Psoas muscle (tissue), 8 donors: ENCODE measurements at regions of chr9 and their contacts with region 1.

Region 1: DNA sequence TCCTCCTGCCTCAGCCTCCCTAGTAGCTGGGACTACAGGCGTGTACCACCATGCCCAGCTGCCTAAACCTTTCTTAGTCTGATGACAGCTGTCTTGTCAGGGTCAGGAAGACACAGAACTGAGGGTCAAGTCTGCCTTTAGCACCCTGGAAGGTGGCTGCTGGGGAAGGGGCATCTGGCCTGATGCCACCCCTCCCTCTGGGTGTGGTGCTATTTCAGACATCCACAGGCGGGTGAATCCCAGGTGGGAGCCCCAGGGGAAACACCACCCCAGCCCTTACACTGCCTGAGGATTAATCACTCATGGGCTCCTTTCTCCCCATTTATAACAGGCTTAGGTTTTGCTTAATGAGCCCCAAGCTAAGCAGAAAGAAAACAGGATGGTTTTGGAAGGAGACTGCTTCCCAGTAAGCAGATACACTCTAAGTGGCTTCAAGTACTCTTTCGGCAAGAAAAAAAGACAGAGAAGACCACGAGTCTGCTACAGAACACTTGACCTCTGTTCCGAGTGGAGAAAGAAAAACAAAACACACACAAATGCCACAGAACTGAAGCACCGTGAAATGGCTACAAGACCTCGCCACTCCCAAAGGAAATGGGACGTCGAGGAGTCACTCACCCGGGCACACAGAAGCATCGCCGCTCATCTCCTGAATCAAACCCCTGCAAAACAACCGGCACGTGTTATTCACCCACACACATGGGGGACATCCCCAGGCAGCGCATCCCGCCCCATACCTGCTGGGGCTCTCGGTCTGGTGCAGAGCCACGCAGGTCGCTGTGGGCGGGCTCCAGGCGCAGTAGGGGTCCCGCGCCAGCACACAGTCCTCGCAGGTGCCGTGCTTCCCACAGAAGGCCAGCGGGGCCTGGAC is 62.4 kb downstream of the SECISBP2 start:
- DNase-seq: peak in 1 of 2 donors; percentile 49
- ATAC-seq: no peak
- H3K4me3 ChIP-seq: no peak overlapping the region
- H3K27ac ChIP-seq: no peak overlapping the region
- H3K4me1 ChIP-seq: no peaks in the 10 kb centered on the region
- H3K27me3 ChIP-seq: no peaks in the 10 kb centered on the region
- CTCF ChIP-seq: no peak

Region 2: DNA sequence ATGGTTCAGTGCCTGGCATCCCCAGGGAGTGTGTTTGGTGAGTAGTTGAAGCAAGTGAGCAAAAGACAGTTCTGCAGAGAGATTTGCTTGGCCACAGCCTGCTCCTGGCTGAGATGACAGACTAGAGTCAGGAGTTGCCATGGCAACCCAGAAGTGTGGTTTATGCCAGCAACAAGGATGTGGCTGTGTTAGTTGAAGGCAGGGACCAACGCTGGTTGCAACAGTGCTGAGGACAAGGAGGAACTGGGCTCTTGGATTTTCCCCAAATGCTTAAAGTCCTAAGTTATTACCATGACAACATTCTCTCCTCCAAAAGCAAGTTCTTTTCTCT is 842.9 kb before region 1 on chr9:
- intact Hi-C with region 1: no loop called
- DNase-seq: peak; percentile 28 to 57
- ATAC-seq: peak in 1 of 4 donors; percentile 48
- H3K4me3 ChIP-seq: no peak overlapping the region
- H3K27ac ChIP-seq: no peak overlapping the region
- H3K4me1 ChIP-seq: peaks cover 4% of the 10 kb centered on the region
- H3K27me3 ChIP-seq: peaks cover 0 to 42% (median 14%) of the 10 kb centered on the region in 3 donors
- CTCF ChIP-seq: no peak

Region 3: GRCh38 chr9:89310475-89311346 is 70.0 kb before region 1 on chr9 and contains the start of gene CKS2:
- intact Hi-C with region 1: no loop called
- DNase-seq: peak; percentile 100
- ATAC-seq: peak; percentile 94 to 97 (median 96)
- H3K4me3 ChIP-seq: peak within 1 kb of the TSS; percentile 76
- H3K27ac ChIP-seq: peak within 1 kb of the TSS; percentile 100
- H3K4me1 ChIP-seq: peaks cover 22% of the 10 kb centered on the region
- H3K27me3 ChIP-seq: no peaks in the 10 kb centered on the region
- CTCF ChIP-seq: no peak
- total RNA-seq, gene CKS2: 3.6 to 14.4 (median 10.6) TPM

Region 4: GRCh38 chr9:89400403-89401116 is 19.9 kb after region 1 on chr9:
- intact Hi-C with region 1: loop called in 1 of 2 experiments (anchors 1 kb)
- DNase-seq: peak in 1 of 2 donors; percentile 13
- ATAC-seq: peak in 1 of 4 donors; percentile 33
- H3K4me3 ChIP-seq: no peak overlapping the region
- H3K27ac ChIP-seq: no peak overlapping the region
- H3K4me1 ChIP-seq: no peaks in the 10 kb centered on the region
- H3K27me3 ChIP-seq: no peaks in the 10 kb centered on the region
- CTCF ChIP-seq: no peak